CD8-positive, alpha-beta T cell (primary cell): ENCODE measurements at regions of chr6 and their contacts with region 1.

Region 1: DNA sequence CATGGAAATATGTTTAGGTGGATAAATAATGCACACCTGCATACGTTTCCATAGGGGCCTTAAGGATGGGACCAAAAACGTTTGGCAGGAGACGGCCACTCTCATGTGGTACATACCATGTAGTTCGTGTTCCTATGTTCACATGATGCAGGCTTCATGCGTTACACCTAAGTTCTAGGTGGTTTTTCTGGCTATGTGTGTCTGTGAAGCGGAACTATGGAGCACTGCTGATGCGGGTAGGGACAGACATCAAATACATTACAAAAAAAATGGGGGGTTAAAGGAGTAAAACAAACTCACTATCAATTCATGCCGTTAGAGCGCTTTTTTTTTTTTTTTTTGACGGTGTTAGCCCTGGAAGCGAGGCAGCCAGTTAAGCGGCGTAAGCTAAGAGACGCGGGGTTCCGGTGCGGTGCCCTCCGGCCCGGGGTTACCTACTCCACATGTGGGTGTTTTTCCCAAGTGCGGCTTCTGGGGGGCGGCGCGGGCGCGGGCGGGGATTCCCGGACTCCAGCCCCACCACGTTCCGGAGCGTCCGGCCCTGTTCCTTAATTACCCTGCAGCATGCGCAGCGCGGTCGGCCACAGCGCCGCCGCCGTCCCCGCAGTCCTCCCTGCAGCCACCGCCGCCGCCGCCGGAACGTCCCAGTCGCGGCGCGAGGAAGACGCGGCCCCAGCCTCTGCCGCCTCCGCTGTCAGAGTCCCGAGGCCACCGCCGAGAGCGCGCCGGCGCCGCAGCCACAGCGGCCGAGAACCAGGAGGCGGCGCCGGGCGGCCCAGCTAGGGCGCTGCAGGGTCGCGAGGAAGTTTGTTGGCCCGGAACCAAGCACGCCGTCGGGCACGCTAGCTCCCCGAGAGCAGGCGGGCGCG is 648 bp downstream of the COL19A1 start:
- DNase-seq: peak; percentile 33 to 81 (median 59)
- ATAC-seq: peak; percentile 75
- H3K4me3 ChIP-seq: peak overlapping the region; percentile 48 to 55
- H3K4me3 Mint-ChIP-seq: peak overlapping the region; percentile 81
- H3K27ac ChIP-seq: no peak overlapping the region
- H3K27ac Mint-ChIP-seq: peak overlapping the region; percentile 65
- H3K4me1 ChIP-seq: peaks cover 8% of the 10 kb centered on the region
- H3K4me1 Mint-ChIP-seq: peaks cover 18% of the 10 kb centered on the region
- H3K27me3 ChIP-seq: peaks cover 0 to 2% of the 10 kb centered on the region in 2 experiments
- H3K27me3 Mint-ChIP-seq: peaks cover 18% of the 10 kb centered on the region
- CTCF ChIP-seq: no peak

Region 2: GRCh38 chr6:69732640-69733039 is 134.4 kb before region 1 on chr6:
- CTCF ChIA-PET with region 1: interaction called, 4 read pairs
- POLR2A ChIA-PET with region 1: interaction called, 3 read pairs
- intact Hi-C with region 1: loop called (anchors 2 to 5 kb)
- DNase-seq: peak in 2 of 9 experiments; percentile 15 to 30
- ATAC-seq: no peak
- H3K4me3 ChIP-seq: no peak overlapping the region
- H3K4me3 Mint-ChIP-seq: no peak overlapping the region
- H3K27ac ChIP-seq: no peak overlapping the region
- H3K27ac Mint-ChIP-seq: no peak overlapping the region
- H3K4me1 ChIP-seq: no peaks in the 10 kb centered on the region
- H3K4me1 Mint-ChIP-seq: no peaks in the 10 kb centered on the region
- H3K27me3 ChIP-seq: no peaks in the 10 kb centered on the region
- H3K27me3 Mint-ChIP-seq: no peaks in the 10 kb centered on the region
- CTCF ChIP-seq: peak; percentile 26

Region 3: DNA sequence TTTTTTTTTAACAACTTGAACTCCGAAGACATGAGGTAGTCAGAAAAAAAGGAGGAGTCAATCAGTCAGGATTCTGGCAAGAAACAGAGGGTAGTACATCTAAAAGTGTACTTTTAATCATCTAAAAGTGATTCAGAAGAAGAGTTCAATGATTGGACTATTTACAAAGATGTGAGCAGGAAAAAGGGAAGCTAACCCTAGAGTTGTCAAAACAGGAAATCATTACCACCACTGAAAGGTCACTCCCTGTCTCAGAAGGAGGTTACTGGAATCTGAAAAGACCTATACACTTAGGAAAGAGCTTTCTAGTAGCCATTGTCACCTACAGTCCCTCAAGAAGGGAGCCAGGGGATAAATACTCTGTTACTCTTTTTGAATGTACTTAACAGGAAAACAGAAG is 53.5 kb before region 1 on chr6:
- CTCF ChIA-PET with region 1: interaction called, 10 read pairs
- POLR2A ChIA-PET with region 1: no interaction called
- intact Hi-C with region 1: no loop called
- DNase-seq: peak in 1 of 9 experiments; percentile 27
- ATAC-seq: no peak
- H3K4me3 ChIP-seq: no peak overlapping the region
- H3K4me3 Mint-ChIP-seq: peak overlapping the region; percentile 12
- H3K27ac ChIP-seq: peak overlapping the region in 1 of 2 experiments; percentile 55
- H3K27ac Mint-ChIP-seq: peak overlapping the region; percentile 87
- H3K4me1 ChIP-seq: peaks cover 45% of the 10 kb centered on the region
- H3K4me1 Mint-ChIP-seq: peaks cover 56% of the 10 kb centered on the region
- H3K27me3 ChIP-seq: no peaks in the 10 kb centered on the region
- H3K27me3 Mint-ChIP-seq: no peaks in the 10 kb centered on the region
- CTCF ChIP-seq: no peak

Region 4: GRCh38 chr6:69835414-69836179 is 31.4 kb before region 1 on chr6:
- CTCF ChIA-PET with region 1: interaction called, 7 read pairs
- POLR2A ChIA-PET with region 1: no interaction called
- intact Hi-C with region 1: loop called in 1 of 2 experiments (anchors 2 kb)
- DNase-seq: peak in 2 of 9 experiments; percentile 54 to 64
- ATAC-seq: peak; percentile 75
- H3K4me3 ChIP-seq: no peak overlapping the region
- H3K4me3 Mint-ChIP-seq: no peak overlapping the region
- H3K27ac ChIP-seq: no peak overlapping the region
- H3K27ac Mint-ChIP-seq: no peak overlapping the region
- H3K4me1 ChIP-seq: no peaks in the 10 kb centered on the region
- H3K4me1 Mint-ChIP-seq: peaks cover 5% of the 10 kb centered on the region
- H3K27me3 ChIP-seq: peaks cover 0 to 3% of the 10 kb centered on the region in 2 experiments
- H3K27me3 Mint-ChIP-seq: peaks cover 13% of the 10 kb centered on the region
- CTCF ChIP-seq: peak; percentile 85

Region 5: DNA sequence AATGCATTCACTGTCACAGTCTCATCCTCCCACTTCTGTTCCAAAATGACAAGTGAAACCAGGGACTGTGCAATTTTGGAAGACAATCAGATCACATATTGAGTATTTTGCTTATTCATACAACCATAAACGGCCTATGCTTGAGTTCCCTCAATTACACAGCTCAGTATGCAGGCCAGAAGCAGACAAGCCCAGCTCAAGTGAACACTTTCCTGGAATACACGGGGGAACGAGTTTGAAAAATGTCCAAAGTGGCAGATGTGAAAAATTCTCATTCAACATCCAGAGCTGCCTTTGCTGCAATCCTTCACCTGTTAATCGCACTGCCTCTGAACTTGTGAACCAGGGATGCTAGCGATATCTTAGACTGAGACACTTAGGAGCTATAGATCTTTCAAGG is 245.7 kb after region 1 on chr6:
- CTCF ChIA-PET with region 1: no interaction called
- POLR2A ChIA-PET with region 1: no interaction called
- intact Hi-C with region 1: no loop called
- DNase-seq: no peak
- ATAC-seq: no peak
- H3K4me3 ChIP-seq: no peak overlapping the region
- H3K4me3 Mint-ChIP-seq: no peak overlapping the region
- H3K27ac ChIP-seq: no peak overlapping the region
- H3K27ac Mint-ChIP-seq: no peak overlapping the region
- H3K4me1 ChIP-seq: no peaks in the 10 kb centered on the region
- H3K4me1 Mint-ChIP-seq: no peaks in the 10 kb centered on the region
- H3K27me3 ChIP-seq: no peaks in the 10 kb centered on the region
- H3K27me3 Mint-ChIP-seq: peaks cover 4% of the 10 kb centered on the region
- CTCF ChIP-seq: no peak